Body of pancreas (tissue), 4 donors: ENCODE measurements at regions of chr2 and their contacts with region 1.

Region 1: DNA sequence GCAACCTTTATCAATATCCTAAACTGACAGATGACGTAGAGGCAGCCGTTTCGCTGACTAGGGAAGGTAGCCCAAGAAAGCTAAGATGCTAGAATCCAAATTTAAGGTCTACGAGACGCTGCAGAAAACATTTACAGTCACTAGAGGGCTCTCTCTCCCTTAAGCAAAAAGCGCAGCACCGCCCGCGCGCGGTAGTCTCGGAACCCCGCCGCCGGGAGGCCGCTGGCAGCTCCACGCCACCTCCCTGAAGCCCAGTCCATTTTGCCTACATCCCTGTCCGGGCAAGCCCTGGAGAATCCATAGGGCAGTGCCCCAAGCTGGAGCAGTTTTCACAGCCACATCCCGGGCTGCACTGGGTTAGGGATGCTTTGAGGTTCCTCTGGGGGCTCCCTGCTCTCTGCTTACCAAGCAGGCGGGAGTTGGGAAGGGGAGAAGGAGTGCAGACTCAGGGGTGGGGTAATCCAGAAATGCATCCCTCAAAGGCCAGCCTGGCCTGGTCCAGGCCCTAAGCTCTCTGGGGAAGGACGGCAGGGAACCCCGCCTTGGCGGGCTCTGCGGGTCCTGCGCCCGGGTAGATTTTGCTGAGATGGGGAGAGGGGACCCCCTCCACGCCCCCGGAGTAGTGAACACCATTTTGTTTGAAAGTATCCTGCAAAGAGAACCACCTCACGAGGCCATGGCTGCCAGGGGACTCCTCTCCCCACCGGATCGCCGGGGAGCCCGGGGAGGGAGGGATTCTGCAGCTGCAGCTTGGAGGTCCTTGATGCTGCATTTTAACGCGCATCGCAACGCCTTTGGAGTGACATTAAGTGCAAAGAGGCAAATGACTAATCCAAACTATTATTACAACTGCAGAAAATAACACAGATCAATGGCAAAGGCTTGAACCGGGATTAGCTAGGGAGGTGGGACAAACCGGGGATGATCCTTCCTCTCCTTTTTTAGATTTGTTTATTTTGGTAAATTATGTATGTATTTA is 1.3 kb upstream of the DPYSL5 start:
- DNase-seq: peak; percentile 64 to 72 (median 66)
- ATAC-seq: peak; percentile 66
- H3K4me3 ChIP-seq: no peak overlapping the region
- H3K27ac ChIP-seq: no peak overlapping the region
- H3K4me1 ChIP-seq: peaks cover 35% of the 10 kb centered on the region
- H3K27me3 ChIP-seq: peaks cover 4 to 41% of the 10 kb centered on the region in 2 donors
- CTCF ChIP-seq: peak; percentile 64 to 85 (median 78)
- POLR2A ChIP-seq: no peak

Region 2: DNA sequence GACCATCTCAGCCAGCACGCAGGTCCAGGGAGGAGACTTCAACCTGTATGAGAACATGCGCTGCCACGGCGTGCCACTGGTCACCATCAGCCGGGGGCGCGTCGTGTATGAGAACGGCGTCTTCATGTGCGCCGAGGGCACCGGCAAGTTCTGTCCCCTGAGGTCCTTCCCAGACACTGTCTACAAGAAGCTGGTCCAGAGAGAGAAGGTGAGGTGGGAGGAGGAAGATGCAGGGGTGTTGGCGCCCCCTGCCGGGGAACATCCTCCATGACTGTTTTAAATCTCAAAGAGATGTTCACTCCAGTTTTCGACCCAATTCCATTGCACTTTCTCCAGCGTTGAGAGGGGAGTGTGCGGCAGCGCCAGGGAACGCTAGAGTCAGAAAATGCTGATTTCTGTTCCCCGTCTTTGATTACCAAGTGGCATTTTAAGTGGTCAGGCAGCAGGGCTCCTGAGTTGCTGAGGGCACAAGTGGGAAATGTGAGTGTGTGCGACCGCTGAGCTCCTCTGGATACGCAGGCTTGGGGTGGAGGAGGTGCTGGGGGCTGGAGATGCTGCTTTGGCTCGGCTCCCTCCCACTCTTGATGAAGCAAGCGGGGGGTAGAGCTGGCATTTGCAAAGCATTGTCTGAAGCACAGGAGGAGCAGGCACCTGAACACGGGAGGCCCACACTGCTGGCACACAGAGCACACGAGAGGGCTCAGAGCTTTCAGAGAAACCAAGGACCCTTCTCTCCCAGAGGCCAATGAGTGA is 96.1 kb after region 1 on chr2:
- intact Hi-C with region 1: loop called (anchors 5 kb)
- DNase-seq: peak; percentile 63 to 77 (median 68)
- ATAC-seq: peak; percentile 49
- H3K4me3 ChIP-seq: no peak overlapping the region
- H3K27ac ChIP-seq: no peak overlapping the region
- H3K4me1 ChIP-seq: peaks cover 11% of the 10 kb centered on the region
- H3K27me3 ChIP-seq: peaks cover 0 to 7% of the 10 kb centered on the region in 2 donors
- CTCF ChIP-seq: peak; percentile 64 to 80 (median 70)
- POLR2A ChIP-seq: no peak

Region 3: GRCh38 chr2:26988058-26988860 is 141.6 kb after region 1 on chr2:
- intact Hi-C with region 1: no loop called
- DNase-seq: no peak
- ATAC-seq: no peak
- H3K4me3 ChIP-seq: no peak overlapping the region
- H3K27ac ChIP-seq: no peak overlapping the region
- H3K4me1 ChIP-seq: no peaks in the 10 kb centered on the region
- H3K27me3 ChIP-seq: no peaks in the 10 kb centered on the region
- CTCF ChIP-seq: no peak
- POLR2A ChIP-seq: no peak